ENCODE measurements at regions of chr2 and their contacts with region 1.

Region 1: GRCh38 chr2:97806738-97807618 is 93.6 kb downstream of the ZAP70 start:
- DNase-seq: peak; percentile 92
- H3K4me3 Mint-ChIP-seq: no peak overlapping the region
- H3K27ac Mint-ChIP-seq: no peak overlapping the region
- H3K4me1 Mint-ChIP-seq: no peaks in the 10 kb centered on the region
- H3K27me3 Mint-ChIP-seq: no peaks in the 10 kb centered on the region

Region 2: DNA sequence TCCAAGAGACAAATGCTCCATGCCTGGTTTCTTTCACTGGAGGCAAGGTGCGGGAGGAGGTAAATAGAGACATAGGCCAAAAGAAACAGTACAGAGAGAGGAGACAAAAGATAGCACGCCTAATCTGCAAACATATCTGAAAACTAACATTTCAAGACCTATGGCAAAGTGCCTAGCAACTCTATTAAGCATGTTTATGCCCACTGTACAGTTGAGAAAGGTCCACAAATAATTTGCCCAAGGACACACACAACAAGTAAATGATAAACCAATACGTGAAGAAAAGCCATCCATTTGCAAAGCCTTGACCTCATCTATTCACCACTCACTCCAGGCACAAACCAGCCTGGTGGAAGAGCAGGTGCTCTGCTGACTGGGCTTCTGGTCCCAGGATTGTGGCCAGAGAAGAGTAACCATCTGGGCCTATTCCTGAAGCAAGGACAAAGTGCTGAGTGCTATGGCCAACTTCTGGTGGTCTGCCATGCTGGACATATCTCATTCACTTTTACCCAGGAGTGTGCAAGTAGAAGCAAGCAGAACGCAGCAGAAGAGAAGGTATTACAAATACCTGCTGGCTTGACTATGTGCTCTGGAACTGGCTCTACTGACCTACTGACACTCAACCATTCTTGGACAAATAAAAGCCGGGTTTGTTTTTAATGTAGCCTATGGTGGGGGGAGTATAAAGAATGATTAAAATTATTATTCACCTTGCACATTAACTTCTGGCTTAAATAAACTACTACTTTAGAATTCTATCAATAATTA is 163.5 kb after region 1 on chr2:
- intact Hi-C with region 1: no loop called
- DNase-seq: no peak
- H3K4me3 Mint-ChIP-seq: no peak overlapping the region
- H3K27ac Mint-ChIP-seq: no peak overlapping the region
- H3K4me1 Mint-ChIP-seq: peaks cover 26% of the 10 kb centered on the region
- H3K27me3 Mint-ChIP-seq: no peaks in the 10 kb centered on the region

Region 3: DNA sequence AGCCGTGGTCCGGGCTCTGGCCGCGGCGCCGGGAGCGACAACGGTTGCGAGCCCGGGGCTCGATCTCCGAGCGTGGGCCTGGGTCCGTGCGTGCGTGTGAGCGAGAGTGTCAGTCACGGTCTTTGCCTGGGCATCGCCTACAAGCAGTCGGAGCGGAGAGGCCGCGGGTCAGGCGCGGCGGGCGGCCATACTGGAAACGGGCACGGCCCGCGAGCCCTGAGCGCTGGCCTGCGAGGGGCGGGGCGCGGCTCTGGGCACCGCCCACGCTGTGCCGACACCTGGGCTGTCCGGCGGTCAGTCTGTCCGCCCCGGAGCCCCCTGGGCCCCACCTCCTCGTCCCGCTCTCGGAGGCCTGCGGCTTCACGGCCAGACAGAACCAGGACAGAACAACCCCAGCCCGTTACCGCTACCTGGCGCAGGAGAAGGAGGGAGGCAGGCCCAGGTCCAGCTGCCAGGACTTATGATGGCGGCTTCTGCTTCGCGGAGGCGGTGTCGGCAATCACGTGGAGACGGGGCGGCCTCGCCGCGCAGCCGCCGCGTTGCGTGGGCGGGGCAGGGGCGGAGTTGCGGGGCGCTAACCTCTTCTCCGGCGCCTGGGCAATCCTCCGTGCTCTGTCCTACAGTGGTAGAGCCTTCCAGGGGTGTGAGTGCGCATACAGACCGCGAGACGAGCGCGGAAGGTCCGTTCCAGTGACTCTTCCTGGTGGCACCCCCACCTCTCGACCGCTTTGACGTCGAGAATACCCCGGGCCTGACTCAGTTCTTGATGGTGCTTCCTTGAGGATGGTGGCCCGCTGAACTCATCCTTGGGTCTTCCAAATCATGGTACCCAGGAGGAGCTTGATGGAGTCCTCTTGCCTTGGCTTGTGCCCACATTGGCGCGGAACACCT is 189.0 kb after region 1 on chr2 and contains the start of gene TMEM131:
- intact Hi-C with region 1: loop called (anchors 1 kb)
- DNase-seq: peak; percentile 99
- H3K4me3 Mint-ChIP-seq: peak within 1 kb of the TSS; percentile 97
- H3K27ac Mint-ChIP-seq: peak within 1 kb of the TSS; percentile 98
- H3K4me1 Mint-ChIP-seq: peaks cover 29% of the 10 kb centered on the region
- H3K27me3 Mint-ChIP-seq: peaks cover 9% of the 10 kb centered on the region
- total RNA-seq, gene TMEM131: 41.7 and 44.1 TPM in 2 replicates

Region 4: GRCh38 chr2:98026927-98027522 is 220.0 kb after region 1 on chr2:
- intact Hi-C with region 1: loop called (anchors 5 kb)
- DNase-seq: no peak
- H3K4me3 Mint-ChIP-seq: peak overlapping the region; percentile 58
- H3K27ac Mint-ChIP-seq: peak overlapping the region; percentile 58
- H3K4me1 Mint-ChIP-seq: peaks cover 17% of the 10 kb centered on the region
- H3K27me3 Mint-ChIP-seq: peaks cover 5% of the 10 kb centered on the region

Region 5: DNA sequence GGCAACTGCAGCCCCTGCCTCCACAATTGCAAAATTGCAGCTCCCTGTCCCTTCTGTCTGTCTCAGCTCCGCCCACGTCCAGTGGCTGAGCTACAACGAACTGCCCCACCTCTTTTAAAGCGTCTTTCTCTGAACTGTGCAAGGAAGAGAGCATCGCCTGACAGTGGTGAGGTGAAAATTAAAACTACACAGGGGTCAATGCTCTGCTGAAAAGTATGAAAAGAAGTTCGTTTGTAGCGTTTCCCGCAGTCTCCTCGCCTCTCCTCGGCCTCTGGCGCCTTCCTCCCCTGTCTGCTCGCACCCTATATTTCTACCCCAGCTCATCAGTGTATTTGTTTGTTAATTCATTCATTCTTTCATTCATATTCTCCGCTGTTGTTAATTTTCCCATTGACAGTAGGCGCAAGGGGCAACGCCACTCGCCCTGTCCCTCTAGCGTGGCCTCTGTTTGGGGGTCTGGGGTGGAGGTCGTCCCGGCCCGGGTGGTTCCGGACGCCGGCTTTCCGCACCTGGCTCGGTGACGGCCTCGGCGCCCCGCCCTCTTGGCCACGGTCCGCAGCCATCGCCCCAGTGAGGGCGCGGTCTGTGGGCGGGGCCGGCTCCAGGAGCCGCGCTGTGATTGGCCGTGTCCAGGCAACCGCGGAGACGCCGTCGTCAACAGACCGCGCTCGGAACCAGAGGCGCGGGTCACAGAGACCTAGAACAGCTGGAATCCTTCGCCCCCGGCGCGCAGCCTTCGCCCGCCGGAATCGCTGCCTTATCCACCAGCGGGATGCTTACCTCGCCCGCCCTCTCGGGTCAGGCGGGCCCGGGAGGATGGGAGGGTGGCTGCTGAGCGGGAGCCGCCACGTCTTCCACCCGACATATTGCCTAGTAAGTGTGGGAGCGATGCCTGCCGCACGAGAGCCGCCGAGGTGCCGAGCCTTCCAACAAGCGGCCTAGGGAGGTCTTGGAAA is 279.8 kb after region 1 on chr2 and contains the start of gene VWA3B:
- intact Hi-C with region 1: loop called (anchors 2 kb)
- DNase-seq: peak; percentile 91
- H3K4me3 Mint-ChIP-seq: peak within 1 kb of the TSS; percentile 81
- H3K27ac Mint-ChIP-seq: no peak within 1 kb of the TSS
- H3K4me1 Mint-ChIP-seq: peaks cover 22% of the 10 kb centered on the region
- H3K27me3 Mint-ChIP-seq: peaks cover 26% of the 10 kb centered on the region
- total RNA-seq, gene VWA3B: not detected in 2 replicates

Region 6: DNA sequence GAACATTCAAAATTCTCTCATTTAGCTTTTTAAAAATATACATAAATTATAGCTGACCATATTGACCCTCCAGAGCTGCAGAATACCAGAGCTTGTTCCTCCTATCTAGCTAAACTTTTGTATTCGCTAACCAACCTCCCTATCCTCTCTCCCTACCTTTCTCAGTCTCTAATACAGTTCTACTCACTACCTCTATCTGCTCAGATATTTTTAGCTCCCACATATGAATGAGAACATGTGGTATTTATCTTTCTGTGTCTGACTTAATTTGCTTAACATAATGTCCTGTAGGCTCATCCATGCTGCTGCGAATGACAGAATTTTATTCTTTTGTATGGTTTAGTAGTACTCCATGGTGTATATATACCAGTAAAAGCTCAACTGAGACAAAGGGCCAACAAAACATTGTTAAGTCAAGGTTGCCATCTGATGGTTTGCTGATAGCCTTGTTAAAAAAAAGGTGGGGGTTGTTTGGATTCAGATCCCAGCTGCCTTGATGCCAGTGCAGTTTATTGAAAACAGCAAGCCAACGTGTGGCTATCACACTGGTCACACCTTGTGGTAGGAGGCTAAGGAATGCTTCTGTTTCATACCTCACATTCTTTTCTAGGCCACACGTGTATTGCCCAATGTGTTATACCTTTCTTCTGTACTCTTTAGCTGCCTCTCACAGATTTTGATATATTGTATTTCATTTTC is 381.5 kb after region 1 on chr2:
- intact Hi-C with region 1: loop called (anchors 2 kb)
- DNase-seq: peak; percentile 51
- H3K4me3 Mint-ChIP-seq: no peak overlapping the region
- H3K27ac Mint-ChIP-seq: no peak overlapping the region
- H3K4me1 Mint-ChIP-seq: no peaks in the 10 kb centered on the region
- H3K27me3 Mint-ChIP-seq: peaks cover 6% of the 10 kb centered on the region

Region 7: DNA sequence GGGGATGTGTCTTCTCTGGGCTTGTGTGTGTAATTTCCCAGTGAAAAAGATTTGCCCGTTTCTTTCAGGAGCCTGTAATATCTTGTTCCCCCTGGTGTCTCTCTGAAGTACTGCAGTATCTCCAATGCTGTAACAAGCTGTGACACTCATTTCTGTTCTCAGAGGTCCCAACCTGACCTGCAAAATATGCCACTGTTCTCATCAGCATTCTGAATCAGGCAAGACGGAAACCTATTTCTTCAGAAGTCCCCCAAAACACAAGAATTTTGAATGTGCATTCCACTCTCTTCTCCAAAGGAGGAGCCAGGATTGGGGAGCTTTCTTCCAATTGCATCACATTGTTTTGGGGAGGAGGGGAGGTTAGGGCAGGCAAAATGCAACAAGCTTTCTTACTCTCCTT is 462.3 kb after region 1 on chr2:
- intact Hi-C with region 1: loop called (anchors 2 kb)
- DNase-seq: peak; percentile 72
- H3K4me3 Mint-ChIP-seq: no peak overlapping the region
- H3K27ac Mint-ChIP-seq: no peak overlapping the region
- H3K4me1 Mint-ChIP-seq: no peaks in the 10 kb centered on the region
- H3K27me3 Mint-ChIP-seq: peaks cover 6% of the 10 kb centered on the region

Region 8: DNA sequence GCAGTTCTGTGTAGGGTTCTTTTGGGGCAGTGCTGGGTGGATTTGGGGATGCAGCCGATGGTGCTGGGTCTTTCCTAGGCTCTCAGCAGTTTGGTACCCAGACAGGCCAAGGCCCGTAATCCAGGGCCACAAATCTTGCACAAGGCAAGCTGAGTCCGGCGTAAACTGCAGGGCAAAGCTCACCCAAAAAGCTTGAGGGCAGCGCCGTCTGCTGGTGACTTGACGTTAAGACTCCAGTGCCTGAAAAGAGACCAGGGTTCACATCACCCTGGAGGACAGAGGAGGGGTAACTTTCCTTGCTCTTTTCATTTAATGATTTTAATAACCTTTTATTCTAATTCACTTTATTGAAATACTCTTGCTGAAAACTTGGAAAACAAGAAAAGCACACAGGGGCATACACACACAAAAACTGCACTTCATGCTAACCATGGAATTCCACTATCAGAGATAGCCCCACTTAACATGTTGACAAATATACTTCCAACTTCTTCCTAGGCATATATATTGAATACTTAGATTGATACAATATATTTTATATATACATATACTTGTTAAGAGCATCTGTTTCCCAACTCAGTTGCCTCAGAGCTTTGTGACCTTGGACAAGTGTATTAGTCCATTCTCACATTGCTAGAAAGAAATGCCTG is 578.2 kb after region 1 on chr2:
- intact Hi-C with region 1: loop called (anchors 1 kb)
- DNase-seq: peak; percentile 92
- H3K4me3 Mint-ChIP-seq: no peak overlapping the region
- H3K27ac Mint-ChIP-seq: no peak overlapping the region
- H3K4me1 Mint-ChIP-seq: peaks cover 3% of the 10 kb centered on the region
- H3K27me3 Mint-ChIP-seq: peaks cover 12% of the 10 kb centered on the region